A673 (cell line): ENCODE measurements at regions of chr9 and their contacts with region 1.

Region 1: GRCh38 chr9:4656621-4657020 is 5.5 kb upstream of the PLPP6 start:
- DNase-seq: no peak
- H3K4me3 ChIP-seq: no peak overlapping the region
- H3K27ac ChIP-seq: peak overlapping the region; percentile 99
- H3K4me1 ChIP-seq: peaks cover 57% of the 10 kb centered on the region
- H3K27me3 ChIP-seq: no peaks in the 10 kb centered on the region
- CTCF ChIP-seq: no peak

Region 2: GRCh38 chr9:4630836-4631235 is 25.8 kb before region 1 on chr9:
- CTCF ChIA-PET with region 1: no interaction called
- POLR2A ChIA-PET with region 1: interaction called, 5 read pairs
- intact Hi-C with region 1: loop called (anchors 1 kb)
- DNase-seq: peak; percentile 97
- H3K4me3 ChIP-seq: no peak overlapping the region
- H3K27ac ChIP-seq: peak overlapping the region; percentile 86
- H3K4me1 ChIP-seq: peaks cover 43% of the 10 kb centered on the region
- H3K27me3 ChIP-seq: no peaks in the 10 kb centered on the region
- CTCF ChIP-seq: no peak